K562 (cell line): ENCODE measurements at regions of chr11 and their contacts with region 1.

Region 1: DNA sequence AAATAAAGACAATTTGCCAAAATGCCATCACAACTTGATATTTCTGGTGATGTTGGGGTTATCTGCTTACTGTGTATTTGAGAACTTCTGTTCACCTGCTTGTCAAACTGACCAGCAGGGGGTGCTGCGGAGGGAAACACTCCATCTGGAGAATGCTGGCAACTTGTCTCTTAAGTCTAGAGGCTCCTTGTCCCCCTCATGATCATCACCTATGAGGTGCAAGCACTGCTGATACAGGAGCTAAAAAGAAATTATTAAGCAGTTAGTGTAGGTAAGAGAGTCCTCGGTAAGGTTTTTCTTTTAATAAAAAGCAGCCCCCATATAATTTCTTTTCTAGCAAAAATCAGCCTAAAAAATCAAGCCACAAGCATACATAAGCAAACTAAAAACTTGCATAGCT is 32.7 kb upstream of the GLYATL1B start:
- DNase-seq: peak; percentile 17 to 77 (median 38)
- ATAC-seq: peak; percentile 85
- H3K4me3 ChIP-seq: no peak overlapping the region
- H3K27ac ChIP-seq: no peak overlapping the region
- H3K4me1 ChIP-seq: no peaks in the 10 kb centered on the region
- H3K27me3 ChIP-seq: no peaks in the 10 kb centered on the region
- CTCF ChIP-seq: peak; percentile 57 to 69 (median 65)
- EP300 ChIP-seq: no peak
- POLR2A ChIP-seq: no peak
- RAD21 ChIP-seq: peak in 1 of 2 experiments; percentile 53; a peak in 3 of 4 replicates

Region 2: DNA sequence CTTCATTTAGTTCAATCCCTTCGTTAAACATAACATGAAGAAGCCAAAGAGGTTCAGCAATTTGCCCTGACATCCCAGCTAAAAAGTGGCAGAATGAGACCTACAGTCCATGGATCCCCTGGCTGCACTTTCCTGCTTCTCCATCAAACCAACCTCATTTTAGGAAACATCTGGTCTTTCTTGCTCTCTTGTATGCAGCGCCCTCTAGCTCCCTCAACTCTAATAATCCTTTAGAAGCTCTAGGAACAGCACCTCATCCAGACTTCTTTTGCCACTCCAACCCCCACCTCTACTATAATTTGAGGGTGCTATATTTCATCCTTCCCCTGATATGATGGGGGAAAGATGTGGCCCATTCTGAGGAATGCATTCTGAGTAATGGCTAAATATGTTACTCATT is 423.5 kb before region 1 on chr11:
- CTCF ChIA-PET with region 1: no interaction called
- POLR2A ChIA-PET with region 1: no interaction called
- in situ Hi-C with region 1: no loop called
- intact Hi-C with region 1: loop called (anchors 10 kb)
- DNase-seq: peak; percentile 22 to 69 (median 38)
- ATAC-seq: peak; percentile 86
- H3K4me3 ChIP-seq: no peak overlapping the region
- H3K27ac ChIP-seq: no peak overlapping the region
- H3K4me1 ChIP-seq: no peaks in the 10 kb centered on the region
- H3K27me3 ChIP-seq: no peaks in the 10 kb centered on the region
- CTCF ChIP-seq: peak; percentile 73 to 82 (median 75)
- EP300 ChIP-seq: no peak
- POLR2A ChIP-seq: no peak
- RAD21 ChIP-seq: peak; percentile 42 to 71; a peak in 3 of 4 replicates

Region 3: GRCh38 chr11:58958500-58958899 is 94.9 kb before region 1 on chr11:
- CTCF ChIA-PET with region 1: no interaction called
- POLR2A ChIA-PET with region 1: no interaction called
- in situ Hi-C with region 1: no loop called
- intact Hi-C with region 1: loop called (anchors 5 kb)
- DNase-seq: peak; percentile 55 to 67 (median 58)
- ATAC-seq: peak; percentile 87
- H3K4me3 ChIP-seq: no peak overlapping the region
- H3K27ac ChIP-seq: no peak overlapping the region
- H3K4me1 ChIP-seq: no peaks in the 10 kb centered on the region
- H3K27me3 ChIP-seq: peaks cover 0 to 5% of the 10 kb centered on the region in 2 experiments; a peak in 1 of 5 replicates
- CTCF ChIP-seq: peak; percentile 46 to 54 (median 50); a peak in 5 of 6 replicates
- EP300 ChIP-seq: no peak
- POLR2A ChIP-seq: no peak
- RAD21 ChIP-seq: peak; percentile 26; a peak in 2 of 4 replicates

Region 4: DNA sequence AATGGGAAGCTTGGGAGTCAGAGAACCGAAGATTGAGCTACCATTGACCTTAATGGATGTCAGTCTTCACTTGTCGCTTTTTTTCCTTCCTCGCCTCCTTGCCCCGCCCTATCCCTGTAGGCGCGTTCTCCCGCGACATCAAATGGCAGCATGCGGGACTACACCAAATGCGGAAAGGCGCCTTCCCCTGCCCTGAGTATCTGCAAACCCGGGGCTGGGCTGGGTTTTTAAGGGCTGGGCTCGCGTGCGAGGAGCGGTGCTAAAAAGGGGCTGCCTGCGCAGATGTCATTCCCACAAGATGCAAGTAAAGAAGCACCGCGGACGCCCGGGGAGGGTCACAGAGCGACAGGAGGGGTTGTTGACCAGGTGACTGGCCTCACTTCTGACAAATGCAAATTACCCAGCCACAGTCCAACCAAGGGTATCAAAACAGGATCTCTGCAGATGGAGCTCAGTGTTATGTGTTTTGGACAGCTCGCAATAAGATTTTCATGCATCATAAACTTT is 48.9 kb after region 1 on chr11:
- CTCF ChIA-PET with region 1: no interaction called
- POLR2A ChIA-PET with region 1: no interaction called
- in situ Hi-C with region 1: no loop called
- intact Hi-C with region 1: loop called (anchors 1 kb)
- DNase-seq: peak; percentile 17 to 68 (median 43)
- ATAC-seq: peak; percentile 99
- H3K4me3 ChIP-seq: no peak overlapping the region
- H3K27ac ChIP-seq: no peak overlapping the region
- H3K4me1 ChIP-seq: peaks cover 0 to 10% of the 10 kb centered on the region in 2 experiments; a peak in 2 of 5 replicates
- H3K27me3 ChIP-seq: peaks cover 0 to 11% of the 10 kb centered on the region in 2 experiments; a peak in 3 of 5 replicates
- CTCF ChIP-seq: peak; percentile 50 to 59 (median 55); a peak in 4 of 6 replicates
- EP300 ChIP-seq: no peak
- POLR2A ChIP-seq: no peak
- RAD21 ChIP-seq: peak; percentile 24 to 49; a peak in 3 of 4 replicates

Region 5: GRCh38 chr11:59135648-59136461 is 82.5 kb after region 1 on chr11:
- CTCF ChIA-PET with region 1: interaction called, 8 read pairs
- POLR2A ChIA-PET with region 1: no interaction called
- in situ Hi-C with region 1: no loop called
- intact Hi-C with region 1: loop called (anchors 1 kb)
- DNase-seq: peak; percentile 80 to 83 (median 81)
- ATAC-seq: peak; percentile 100
- H3K4me3 ChIP-seq: peak overlapping the region; percentile 9; the same call in 1 of the 2 replicates
- H3K27ac ChIP-seq: no peak overlapping the region
- H3K4me1 ChIP-seq: peaks cover 2 to 3% of the 10 kb centered on the region in 2 experiments; a peak in 2 of 5 replicates
- H3K27me3 ChIP-seq: no peaks in the 10 kb centered on the region
- CTCF ChIP-seq: peak; percentile 93 to 97 (median 93)
- EP300 ChIP-seq: no peak
- POLR2A ChIP-seq: no peak
- RAD21 ChIP-seq: peak; percentile 83 to 88

Region 6: GRCh38 chr11:59158206-59159068 is 105.0 kb after region 1 on chr11:
- CTCF ChIA-PET with region 1: no interaction called
- POLR2A ChIA-PET with region 1: interaction called, 3 read pairs
- in situ Hi-C with region 1: loop called (anchors 5 kb)
- intact Hi-C with region 1: loop called (anchors 2 kb)
- DNase-seq: peak; percentile 61 to 77 (median 68)
- ATAC-seq: peak; percentile 97
- H3K4me3 ChIP-seq: no peak overlapping the region
- H3K27ac ChIP-seq: no peak overlapping the region
- H3K4me1 ChIP-seq: no peaks in the 10 kb centered on the region
- H3K27me3 ChIP-seq: 0 out of 5 replicates have a peak, but pooled peaks cover 0 to 4% of the 10 kb centered on the region in 2 experiments
- CTCF ChIP-seq: peak; percentile 75 to 89 (median 83)
- EP300 ChIP-seq: no peak
- POLR2A ChIP-seq: no peak
- RAD21 ChIP-seq: peak; percentile 82 to 86